ENCODE measurements at regions of chr19 and their contacts with region 1.

Region 1: DNA sequence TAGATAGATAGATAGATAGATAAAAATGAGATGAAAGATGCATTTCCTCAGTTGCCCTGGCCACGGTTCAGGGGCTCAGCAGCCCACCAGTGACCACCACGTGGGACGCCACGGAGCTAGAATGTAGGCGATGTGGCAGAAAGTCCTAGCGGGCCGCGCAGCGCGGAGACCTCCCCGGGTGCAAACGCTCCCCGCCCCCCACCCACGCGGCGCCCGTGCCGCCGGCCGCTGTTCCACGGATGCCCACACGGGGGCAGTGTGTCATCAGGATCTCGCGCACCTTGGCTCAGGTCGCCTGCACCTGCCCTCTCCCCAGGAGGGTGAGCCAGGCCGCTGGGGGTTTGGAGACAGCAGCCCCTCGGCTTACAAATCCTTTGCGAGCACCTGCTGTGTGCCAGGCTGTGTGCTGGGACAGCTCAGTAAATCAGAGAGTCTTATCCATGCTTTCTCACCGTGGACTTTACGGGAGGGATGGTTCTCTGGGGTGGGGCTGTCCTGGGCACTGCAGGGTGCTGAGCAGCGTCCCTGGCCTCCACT is 13.7 kb upstream of the TLE5 start:
- DNase-seq: no peak
- ATAC-seq: peak; percentile 82 to 86
- H3K4me3 ChIP-seq: 0 out of 3 replicates have a peak overlapping the region, but pooled peaks have one; percentile 17
- H3K27ac ChIP-seq: peak overlapping the region; percentile 12 to 76; a peak in 3 of 6 replicates
- H3K4me1 ChIP-seq: no peaks in the 10 kb centered on the region
- CTCF ChIP-seq: peak; percentile 74
- EP300 ChIP-seq: no peak
- POLR2A ChIP-seq: no peak
- RAD21 ChIP-seq: peak; percentile 66 to 80

Region 2: GRCh38 chr19:3035542-3036118 is 40.3 kb before region 1 on chr19:
- CTCF ChIA-PET with region 1: interaction called, 12 read pairs
- POLR2A ChIA-PET with region 1: no interaction called
- DNase-seq: peak; percentile 98 to 99
- ATAC-seq: peak; percentile 90 to 94
- H3K4me3 ChIP-seq: peak overlapping the region; percentile 65
- H3K27ac ChIP-seq: peak overlapping the region; percentile 90 to 94
- H3K4me1 ChIP-seq: peaks cover 12% of the 10 kb centered on the region
- CTCF ChIP-seq: no peak
- EP300 ChIP-seq: no peak
- POLR2A ChIP-seq: peak; percentile 3; the same call in 1 of the 2 replicates
- RAD21 ChIP-seq: no peak

Region 3: GRCh38 chr19:3057306-3057714 is 18.7 kb before region 1 on chr19:
- CTCF ChIA-PET with region 1: interaction called, 14 read pairs
- POLR2A ChIA-PET with region 1: no interaction called
- DNase-seq: peak; percentile 37 to 62
- ATAC-seq: no peak
- H3K4me3 ChIP-seq: no peak overlapping the region
- H3K27ac ChIP-seq: peak overlapping the region; percentile 88 to 96
- H3K4me1 ChIP-seq: peaks cover 65% of the 10 kb centered on the region
- CTCF ChIP-seq: no peak
- EP300 ChIP-seq: no peak
- POLR2A ChIP-seq: no peak
- RAD21 ChIP-seq: no peak

Region 4: GRCh38 chr19:3094601-3095437 is 18.9 kb after region 1 on chr19:
- CTCF ChIA-PET with region 1: interaction called, 15 read pairs
- POLR2A ChIA-PET with region 1: no interaction called
- DNase-seq: no peak
- ATAC-seq: peak; percentile 23 to 32; a peak in 4 of 6 replicates
- H3K4me3 ChIP-seq: peak overlapping the region; percentile 94
- H3K27ac ChIP-seq: peak overlapping the region; percentile 82 to 90
- H3K4me1 ChIP-seq: peaks cover 10% of the 10 kb centered on the region; the same call in 2 of the 3 replicates
- CTCF ChIP-seq: no peak
- EP300 ChIP-seq: no peak
- POLR2A ChIP-seq: no peak
- RAD21 ChIP-seq: no peak

Region 5: DNA sequence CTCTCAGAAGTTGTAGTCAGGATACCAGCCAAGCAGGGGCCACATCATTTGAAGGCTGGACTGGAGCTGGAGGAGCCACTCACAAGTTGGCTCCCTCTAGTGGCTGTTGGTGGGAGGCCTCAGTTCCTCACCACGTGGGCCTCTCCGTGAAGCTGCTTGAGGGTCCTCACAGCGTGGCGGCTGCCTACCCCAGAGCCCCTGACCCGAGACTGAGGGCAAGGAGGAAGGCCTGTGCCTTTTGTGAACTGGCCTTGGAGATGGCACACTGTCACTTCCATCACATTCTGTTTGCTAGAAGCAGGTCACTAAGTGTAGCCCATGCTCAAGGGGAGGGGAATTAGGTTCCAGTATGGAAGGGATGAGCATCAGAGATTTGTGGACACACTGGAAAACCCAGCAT is 32.8 kb after region 1 on chr19:
- CTCF ChIA-PET with region 1: interaction called, 35 read pairs
- POLR2A ChIA-PET with region 1: no interaction called
- DNase-seq: peak in 1 of 2 experiments; percentile 55
- ATAC-seq: peak; percentile 67 to 77
- H3K4me3 ChIP-seq: no peak overlapping the region
- H3K27ac ChIP-seq: no peak overlapping the region
- H3K4me1 ChIP-seq: 0 out of 3 replicates have a peak, but pooled peaks cover under 1% of the 10 kb centered on the region
- CTCF ChIP-seq: peak; percentile 59
- EP300 ChIP-seq: no peak
- POLR2A ChIP-seq: no peak
- RAD21 ChIP-seq: peak in 1 of 2 experiments; percentile 39; a peak in 3 of 5 replicates

Region 6: GRCh38 chr19:3137119-3137518 is 61.2 kb after region 1 on chr19:
- CTCF ChIA-PET with region 1: no interaction called
- POLR2A ChIA-PET with region 1: no interaction called
- DNase-seq: no peak
- ATAC-seq: no peak
- H3K4me3 ChIP-seq: no peak overlapping the region
- H3K27ac ChIP-seq: no peak overlapping the region
- H3K4me1 ChIP-seq: peaks cover 8% of the 10 kb centered on the region
- CTCF ChIP-seq: no peak
- EP300 ChIP-seq: no peak
- POLR2A ChIP-seq: no peak
- RAD21 ChIP-seq: no peak

Region 7: GRCh38 chr19:3163230-3163886 is 87.4 kb after region 1 on chr19:
- CTCF ChIA-PET with region 1: interaction called, 14 read pairs
- POLR2A ChIA-PET with region 1: no interaction called
- DNase-seq: peak; percentile 60 to 84
- ATAC-seq: peak; percentile 95 to 97
- H3K4me3 ChIP-seq: no peak overlapping the region
- H3K27ac ChIP-seq: peak overlapping the region in 1 of 2 experiments; percentile 64; a peak in 2 of 6 replicates
- H3K4me1 ChIP-seq: peaks cover 9% of the 10 kb centered on the region; the same call in 1 of the 3 replicates
- CTCF ChIP-seq: peak; percentile 83
- EP300 ChIP-seq: no peak
- POLR2A ChIP-seq: no peak
- RAD21 ChIP-seq: peak; percentile 88 to 93

Region 8: DNA sequence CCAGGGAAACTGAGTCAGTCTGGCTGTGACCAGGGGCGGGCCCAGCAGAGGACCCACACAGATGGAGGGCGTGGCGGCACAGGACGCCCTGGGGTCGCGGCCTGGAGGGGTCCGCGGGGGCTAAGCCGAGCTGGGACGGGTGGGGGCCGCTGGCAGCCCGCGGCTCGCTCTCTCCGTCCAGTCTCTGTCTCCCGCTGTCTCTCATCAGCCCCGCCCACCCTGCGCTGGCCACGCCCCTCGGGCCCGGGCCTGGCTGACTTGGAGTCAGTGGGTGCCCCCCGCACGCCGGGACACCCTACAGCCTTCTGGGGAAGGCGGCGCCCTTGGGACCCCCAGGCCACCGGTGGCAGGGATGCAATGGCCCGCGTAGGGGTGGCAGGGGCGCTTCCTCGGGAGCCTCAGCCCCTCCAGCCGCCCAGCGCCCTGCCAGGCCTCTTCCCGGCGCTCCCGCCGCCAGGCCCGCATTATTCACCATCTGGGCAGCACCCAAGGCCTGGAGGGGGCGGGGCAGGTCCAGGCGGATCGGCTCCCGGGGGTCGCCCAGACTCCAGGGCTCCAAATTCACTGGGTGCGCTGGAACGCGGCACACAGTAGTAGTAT is 530.8 kb after region 1 on chr19 and contains the start of gene TBXA2R:
- CTCF ChIA-PET with region 1: no interaction called
- POLR2A ChIA-PET with region 1: no interaction called
- DNase-seq: peak; percentile 51 to 70
- ATAC-seq: peak; percentile 77 to 89
- H3K4me3 ChIP-seq: peak within 1 kb of the TSS; percentile 40
- H3K27ac ChIP-seq: peak within 1 kb of the TSS; percentile 72 to 91
- H3K4me1 ChIP-seq: peaks cover 19% of the 10 kb centered on the region
- CTCF ChIP-seq: no peak
- EP300 ChIP-seq: no peak
- POLR2A ChIP-seq: no peak; the same call in 1 of the 2 replicates
- RAD21 ChIP-seq: no peak
- polyA plus RNA-seq, gene TBXA2R: 0.13 and 0.26 TPM in 2 replicates